ENCODE measurements at regions of chr9 and their contacts with region 1.

Region 1: DNA sequence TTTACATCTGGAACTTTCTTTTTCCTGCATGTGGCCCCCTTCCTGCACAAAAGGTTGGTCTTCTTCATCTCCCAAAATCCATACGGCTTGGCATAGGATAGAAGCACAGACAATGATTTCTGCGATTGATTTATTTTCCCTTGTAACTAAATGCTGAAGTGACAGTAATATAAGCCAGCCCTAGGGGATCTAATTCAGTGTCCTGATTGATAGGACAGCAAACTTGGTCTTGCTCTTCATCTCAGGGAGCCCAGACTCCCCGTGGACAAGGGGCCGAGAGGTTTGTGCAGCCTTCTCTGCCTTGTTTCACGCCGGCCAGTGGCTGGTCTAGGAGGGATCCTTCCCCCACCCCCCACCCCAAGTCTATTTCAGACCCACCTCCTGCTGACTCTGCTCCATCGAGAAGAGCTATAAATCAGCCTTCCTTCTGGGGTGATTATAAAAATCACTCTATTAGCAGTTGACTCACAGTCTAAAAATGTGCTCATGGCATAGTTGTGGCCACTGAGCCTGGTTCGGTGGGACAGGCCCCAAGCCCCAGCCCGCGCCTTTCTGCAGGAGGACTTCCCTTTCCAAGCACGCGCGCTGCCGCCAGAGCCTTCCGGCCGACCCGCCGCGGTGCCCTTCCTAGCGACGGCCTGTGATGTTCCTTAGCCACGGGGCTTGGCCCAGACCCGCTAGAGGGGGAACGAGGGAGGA is 89.8 kb upstream of the COL5A1 start:
- DNase-seq: peak; percentile 52 to 81
- H3K4me3 ChIP-seq: no peak overlapping the region
- H3K27ac ChIP-seq: no peak overlapping the region
- H3K4me1 ChIP-seq: peaks cover 11% of the 10 kb centered on the region
- H3K27me3 ChIP-seq: peaks cover 31% of the 10 kb centered on the region; the same call in 1 of the 2 replicates
- CTCF ChIP-seq: no peak

Region 2: DNA sequence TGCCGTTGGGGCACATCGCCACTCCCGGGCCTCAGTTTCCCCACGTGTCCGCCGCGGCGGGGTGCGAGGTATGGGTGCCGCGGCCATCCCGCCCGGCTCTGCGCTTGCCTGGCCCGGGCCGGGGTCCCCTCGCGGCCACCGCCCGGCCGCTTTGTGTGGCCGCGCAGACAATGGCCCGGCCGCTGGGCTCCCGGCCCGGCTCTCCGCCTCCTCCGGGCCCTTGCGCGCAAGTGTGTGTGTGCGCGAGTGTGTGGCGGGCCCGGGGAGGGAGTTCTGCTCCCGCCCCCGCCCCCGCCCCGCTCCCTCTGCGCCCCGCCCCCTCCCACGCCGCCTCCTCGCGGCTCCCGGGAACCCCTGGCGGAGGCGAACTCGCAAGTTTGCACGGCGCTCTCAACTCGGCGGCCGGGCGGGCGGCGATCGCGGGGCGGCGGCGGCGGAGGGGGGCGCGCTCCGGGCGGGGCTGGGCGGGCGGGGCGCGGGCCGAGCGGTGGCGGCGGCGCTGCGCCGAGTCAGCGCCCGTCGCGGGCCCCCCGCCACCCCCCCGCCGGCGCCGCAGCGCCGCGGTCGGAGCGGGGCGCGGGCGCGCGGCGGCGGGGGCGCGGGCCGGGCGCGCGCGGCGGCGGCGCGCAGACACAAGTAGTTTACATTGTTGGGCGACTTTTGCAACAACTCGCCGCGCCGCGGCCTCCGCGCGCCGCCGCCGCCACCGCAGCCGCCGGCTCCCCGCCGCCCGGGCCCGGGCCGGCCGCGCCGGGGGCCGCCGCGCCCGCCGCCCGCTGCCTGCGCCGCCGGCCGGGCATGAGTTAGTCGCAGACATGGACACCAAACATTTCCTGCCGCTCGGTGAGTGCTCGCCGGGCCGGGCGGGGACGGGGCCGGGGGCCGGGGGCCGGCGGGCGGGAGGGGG is 225.7 kb before region 1 on chr9 and contains the start of gene RXRA:
- CTCF ChIA-PET with region 1: no interaction called
- POLR2A ChIA-PET with region 1: no interaction called
- intact Hi-C with region 1: no loop called
- DNase-seq: peak; percentile 58 to 93
- H3K4me3 ChIP-seq: peak within 1 kb of the TSS; percentile 87
- H3K27ac ChIP-seq: peak within 1 kb of the TSS; percentile 66
- H3K4me1 ChIP-seq: peaks cover 32% of the 10 kb centered on the region
- H3K27me3 ChIP-seq: no peaks in the 10 kb centered on the region
- CTCF ChIP-seq: no peak
- total RNA-seq, gene RXRA: 116 and 146 TPM in 2 replicates

Region 3: DNA sequence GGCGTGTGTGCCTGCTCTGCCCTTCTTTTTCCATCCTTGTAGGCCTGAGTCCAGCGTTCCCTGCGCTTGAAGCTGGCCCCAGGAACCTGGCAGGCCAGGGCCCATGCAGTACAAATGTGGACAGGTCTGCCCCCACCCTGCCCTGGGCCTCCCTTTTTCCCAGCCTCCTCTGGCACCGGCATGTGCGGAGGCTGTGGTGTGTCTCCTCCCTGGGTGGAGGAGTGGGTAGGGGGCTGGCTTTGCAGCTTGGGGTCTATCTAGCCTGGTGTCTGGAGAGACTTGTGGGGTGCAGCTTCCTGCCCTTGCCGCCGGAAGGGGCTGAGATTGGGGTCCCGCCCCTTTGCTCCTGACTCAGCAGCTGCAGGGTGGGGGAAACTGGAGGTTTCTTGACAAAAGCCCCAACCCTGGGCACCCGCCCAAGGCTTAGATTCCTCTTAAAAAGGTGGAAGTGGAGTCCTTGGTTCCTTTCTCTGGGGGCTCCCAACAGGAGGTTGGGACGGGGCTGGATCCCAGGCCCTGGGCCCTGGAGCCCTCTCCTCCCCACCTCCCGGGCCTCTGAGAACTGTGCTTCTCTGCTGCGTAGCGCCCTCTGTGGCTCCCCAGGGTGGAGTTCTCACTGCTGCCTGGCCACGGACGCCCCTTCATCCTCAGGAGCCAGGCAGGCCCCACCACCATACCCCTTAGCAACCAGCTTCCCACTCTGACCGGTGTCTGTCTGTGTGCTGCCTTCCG is 207.6 kb before region 1 on chr9:
- CTCF ChIA-PET with region 1: no interaction called
- POLR2A ChIA-PET with region 1: no interaction called
- intact Hi-C with region 1: no loop called
- DNase-seq: no peak
- H3K4me3 ChIP-seq: no peak overlapping the region
- H3K27ac ChIP-seq: no peak overlapping the region
- H3K4me1 ChIP-seq: no peaks in the 10 kb centered on the region
- H3K27me3 ChIP-seq: no peaks in the 10 kb centered on the region
- CTCF ChIP-seq: no peak

Region 4: GRCh38 chr9:134585746-134586706 is 34.2 kb after region 1 on chr9:
- CTCF ChIA-PET with region 1: no interaction called
- POLR2A ChIA-PET with region 1: interaction called, 21 read pairs
- intact Hi-C with region 1: no loop called
- DNase-seq: peak in 1 of 2 experiments; percentile 58
- H3K4me3 ChIP-seq: no peak overlapping the region
- H3K27ac ChIP-seq: no peak overlapping the region
- H3K4me1 ChIP-seq: no peaks in the 10 kb centered on the region
- H3K27me3 ChIP-seq: peaks cover 7% of the 10 kb centered on the region; the same call in 1 of the 2 replicates
- CTCF ChIP-seq: no peak

Region 5: DNA sequence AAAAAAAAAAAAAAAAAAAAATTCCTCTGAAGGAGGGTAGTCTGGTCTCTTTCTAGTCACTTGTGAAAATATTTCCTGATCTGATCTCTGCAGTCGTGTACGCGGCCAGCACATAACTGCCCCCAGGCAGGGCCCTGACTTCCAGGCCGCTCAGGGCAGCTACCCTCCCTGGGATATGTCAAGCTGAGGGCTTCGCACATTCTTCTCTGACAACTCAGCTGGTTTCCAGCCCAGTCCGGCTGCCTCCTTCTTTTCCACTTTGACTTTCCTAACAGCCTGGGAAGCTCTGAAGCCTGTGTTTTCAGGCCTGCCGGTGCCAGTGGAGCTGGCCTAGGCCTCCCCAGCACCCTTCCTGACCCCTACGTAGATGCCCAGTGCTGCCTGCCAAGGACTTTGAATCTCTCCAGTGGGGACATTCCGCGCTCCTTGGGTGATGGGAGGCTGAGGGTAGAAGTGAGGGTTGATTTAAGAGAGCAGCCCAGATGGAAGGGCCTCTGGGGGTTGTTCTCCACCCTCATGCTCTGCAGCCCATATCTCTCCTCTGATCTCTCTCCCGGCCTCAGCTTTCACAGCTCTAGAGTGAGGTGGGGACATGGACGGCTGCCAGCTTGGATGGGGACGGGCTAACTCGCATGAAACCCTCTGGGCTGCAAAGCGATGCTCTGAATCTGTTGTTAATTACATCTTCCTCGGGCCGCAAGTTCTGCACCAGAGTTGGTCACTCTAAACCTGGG is 110.5 kb after region 1 on chr9:
- CTCF ChIA-PET with region 1: no interaction called
- POLR2A ChIA-PET with region 1: interaction called, 15 read pairs
- intact Hi-C with region 1: no loop called
- DNase-seq: peak; percentile 52 to 84
- H3K4me3 ChIP-seq: no peak overlapping the region
- H3K27ac ChIP-seq: no peak overlapping the region
- H3K4me1 ChIP-seq: no peaks in the 10 kb centered on the region; the same call in 1 of the 2 replicates
- H3K27me3 ChIP-seq: peaks cover 5% of the 10 kb centered on the region; the same call in 1 of the 2 replicates
- CTCF ChIP-seq: no peak

Measured in PC-9 (cell line).